K562 (cell line): ENCODE measurements at regions of chr5 and their contacts with region 1.

Region 1: DNA sequence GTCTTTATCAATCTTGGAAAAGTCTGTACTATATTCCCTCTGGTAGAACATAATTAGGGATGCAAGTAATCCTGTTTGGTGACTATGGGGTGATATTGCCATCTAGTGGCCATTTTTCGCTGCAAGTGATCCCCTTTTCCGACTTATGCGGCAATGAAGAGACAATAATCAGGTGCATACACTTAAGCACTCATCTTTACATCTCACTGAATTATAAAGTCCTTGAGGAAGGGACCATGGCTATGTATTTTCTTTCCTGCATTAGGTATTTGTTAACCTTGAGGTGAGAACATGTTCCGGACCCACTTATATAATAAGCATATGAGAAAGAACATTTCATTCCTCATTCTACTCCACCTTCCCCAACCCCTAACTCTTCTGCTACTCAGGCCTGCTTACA is 19.6 kb upstream of the LIX1 start:
- DNase-seq: peak; percentile 37 to 79 (median 44)
- ATAC-seq: peak; percentile 91
- H3K4me3 ChIP-seq: no peak overlapping the region
- H3K27ac ChIP-seq: no peak overlapping the region
- H3K4me1 ChIP-seq: no peaks in the 10 kb centered on the region
- H3K27me3 ChIP-seq: no peaks in the 10 kb centered on the region
- CTCF ChIP-seq: peak; percentile 75 to 87 (median 77)
- EP300 ChIP-seq: no peak
- POLR2A ChIP-seq: no peak
- RAD21 ChIP-seq: peak; percentile 85 to 91

Region 2: GRCh38 chr5:96344678-96345577 is 817.1 kb before region 1 on chr5:
- CTCF ChIA-PET with region 1: no interaction called
- POLR2A ChIA-PET with region 1: no interaction called
- in situ Hi-C with region 1: no loop called
- intact Hi-C with region 1: loop called (anchors 10 kb)
- DNase-seq: peak; percentile 17 to 45 (median 29)
- ATAC-seq: peak; percentile 85
- H3K4me3 ChIP-seq: no peak overlapping the region
- H3K27ac ChIP-seq: no peak overlapping the region
- H3K4me1 ChIP-seq: no peaks in the 10 kb centered on the region; a peak in 1 of 5 replicates
- H3K27me3 ChIP-seq: no peaks in the 10 kb centered on the region; a peak in 1 of 5 replicates
- CTCF ChIP-seq: peak; percentile 36 to 70 (median 50); a peak in 4 of 6 replicates
- EP300 ChIP-seq: no peak
- POLR2A ChIP-seq: no peak
- RAD21 ChIP-seq: peak; percentile 80 to 85

Region 3: GRCh38 chr5:96614110-96614691 is 547.8 kb before region 1 on chr5:
- CTCF ChIA-PET with region 1: interaction called, 4 read pairs
- POLR2A ChIA-PET with region 1: no interaction called
- in situ Hi-C with region 1: loop called (anchors 10 kb)
- intact Hi-C with region 1: loop called (anchors 2 kb)
- DNase-seq: peak; percentile 17 to 66 (median 36)
- ATAC-seq: peak; percentile 86
- H3K4me3 ChIP-seq: no peak overlapping the region
- H3K27ac ChIP-seq: no peak overlapping the region
- H3K4me1 ChIP-seq: no peaks in the 10 kb centered on the region
- H3K27me3 ChIP-seq: no peaks in the 10 kb centered on the region
- CTCF ChIP-seq: peak; percentile 41 to 70 (median 53); a peak in 5 of 6 replicates
- EP300 ChIP-seq: no peak
- POLR2A ChIP-seq: no peak
- RAD21 ChIP-seq: peak; percentile 90 to 92

Region 4: DNA sequence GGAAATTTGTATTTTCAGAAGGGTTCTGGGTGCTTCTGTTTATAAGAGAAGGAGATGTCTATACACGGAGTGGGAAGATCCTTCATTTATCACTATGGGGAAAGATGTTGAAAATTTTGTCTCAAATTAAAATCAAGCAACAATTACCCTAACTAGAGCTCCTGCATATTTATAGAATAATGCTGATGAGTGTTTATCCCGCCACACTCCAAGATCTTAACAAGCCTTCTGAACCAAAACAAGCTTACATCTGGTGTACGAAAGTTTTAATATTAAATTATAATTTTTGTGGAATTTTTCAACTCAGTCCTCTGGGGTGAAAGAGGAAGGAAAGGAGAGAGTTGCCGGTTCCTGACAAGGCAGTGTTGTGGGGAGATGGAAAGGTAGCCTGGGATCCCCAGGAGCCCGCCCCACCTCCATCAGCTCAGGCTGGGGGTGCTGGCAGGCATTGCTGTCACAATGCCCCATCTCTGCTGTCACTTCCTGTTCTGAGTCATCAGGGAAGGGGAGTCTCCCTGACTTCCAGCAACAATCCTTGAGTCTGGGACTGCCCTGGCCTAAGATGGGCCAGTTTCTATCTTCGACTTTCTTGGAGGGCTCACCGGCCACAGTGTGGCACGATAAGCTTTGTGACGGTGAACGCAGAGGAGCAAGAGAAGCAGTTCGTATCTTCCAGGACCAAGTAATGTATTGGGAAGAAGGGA is 418.8 kb before region 1 on chr5:
- CTCF ChIA-PET with region 1: no interaction called
- POLR2A ChIA-PET with region 1: no interaction called
- in situ Hi-C with region 1: loop called (anchors 5 kb)
- intact Hi-C with region 1: no loop called
- DNase-seq: peak; percentile 55 to 80 (median 60)
- ATAC-seq: peak; percentile 69
- H3K4me3 ChIP-seq: peak overlapping the region; percentile 28; the same call in 1 of the 2 replicates
- H3K27ac ChIP-seq: peak overlapping the region; percentile 85
- H3K4me1 ChIP-seq: peaks cover 10 to 44% of the 10 kb centered on the region in 2 experiments
- H3K27me3 ChIP-seq: no peaks in the 10 kb centered on the region
- CTCF ChIP-seq: no peak; a peak in 1 of 6 replicates
- EP300 ChIP-seq: no peak
- POLR2A ChIP-seq: no peak; the same call in 1 of the 2 replicates
- RAD21 ChIP-seq: no peak

Region 5: GRCh38 chr5:96868603-96869371 is 293.3 kb before region 1 on chr5:
- CTCF ChIA-PET with region 1: interaction called, 7 read pairs
- POLR2A ChIA-PET with region 1: no interaction called
- in situ Hi-C with region 1: no loop called
- intact Hi-C with region 1: loop called (anchors 1 kb)
- DNase-seq: peak; percentile 27 to 70 (median 42)
- ATAC-seq: peak; percentile 95
- H3K4me3 ChIP-seq: no peak overlapping the region
- H3K27ac ChIP-seq: no peak overlapping the region
- H3K4me1 ChIP-seq: peaks cover 0 to 5% of the 10 kb centered on the region in 2 experiments; a peak in 2 of 5 replicates
- H3K27me3 ChIP-seq: no peaks in the 10 kb centered on the region
- CTCF ChIP-seq: peak; percentile 82 to 94 (median 88)
- EP300 ChIP-seq: no peak
- POLR2A ChIP-seq: no peak
- RAD21 ChIP-seq: peak; percentile 97 to 99

Region 6: DNA sequence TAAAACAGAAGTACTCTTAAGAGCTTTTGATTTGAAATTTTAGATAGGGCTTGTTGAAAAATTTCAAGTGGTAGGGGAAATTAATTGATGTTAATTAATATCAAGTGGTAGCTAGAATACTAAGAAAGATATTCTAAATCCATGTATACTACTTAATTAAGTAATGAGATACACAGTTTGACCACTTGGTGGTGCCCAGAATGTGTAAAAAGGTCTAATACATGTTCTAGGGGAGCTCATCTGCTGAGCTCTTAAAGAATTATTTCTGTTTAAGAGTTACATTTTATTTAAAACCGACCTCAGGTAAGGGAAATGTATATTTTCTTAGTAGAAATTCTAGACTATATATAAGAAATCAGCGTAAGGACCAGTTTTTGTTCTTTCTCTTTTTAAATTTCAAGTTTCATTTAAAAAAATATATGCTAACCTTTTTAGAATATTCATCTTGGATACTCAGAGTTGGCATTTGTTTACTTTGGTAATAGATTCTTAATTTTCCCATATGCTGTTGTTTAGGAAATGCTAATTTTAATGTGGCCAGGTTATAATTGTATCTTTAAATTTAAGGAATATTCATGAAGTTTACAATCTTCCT is 164.7 kb before region 1 on chr5:
- CTCF ChIA-PET with region 1: interaction called, 16 read pairs
- POLR2A ChIA-PET with region 1: no interaction called
- in situ Hi-C with region 1: no loop called
- intact Hi-C with region 1: loop called (anchors 5 kb)
- DNase-seq: peak; percentile 13 to 56 (median 22)
- ATAC-seq: peak; percentile 82
- H3K4me3 ChIP-seq: no peak overlapping the region
- H3K27ac ChIP-seq: no peak overlapping the region
- H3K4me1 ChIP-seq: no peaks in the 10 kb centered on the region
- H3K27me3 ChIP-seq: no peaks in the 10 kb centered on the region
- CTCF ChIP-seq: peak in 2 of 3 experiments; percentile 31 to 60; a peak in 3 of 6 replicates
- EP300 ChIP-seq: no peak
- POLR2A ChIP-seq: no peak
- RAD21 ChIP-seq: peak; percentile 57 to 73

Region 7: DNA sequence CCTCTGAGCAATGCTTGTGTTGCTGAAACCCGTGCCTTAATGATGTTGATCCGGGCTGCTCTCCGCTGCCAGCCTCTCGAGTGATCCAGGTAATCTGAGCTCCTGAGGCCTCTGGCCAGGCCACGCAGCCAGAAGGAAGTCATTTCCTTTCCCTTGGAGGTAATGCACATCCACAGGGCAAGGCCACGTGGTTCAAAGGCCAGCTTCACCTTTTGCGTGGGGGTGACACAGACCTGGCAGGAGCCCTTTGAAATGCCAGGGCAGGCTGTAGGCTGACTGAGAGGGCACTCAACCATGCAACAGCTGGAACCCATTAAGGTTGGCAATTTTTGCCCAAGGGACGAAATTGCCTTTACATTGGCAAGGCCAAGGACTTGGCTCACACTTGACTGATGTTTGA is 100.0 kb before region 1 on chr5:
- CTCF ChIA-PET with region 1: no interaction called
- POLR2A ChIA-PET with region 1: no interaction called
- in situ Hi-C with region 1: no loop called
- intact Hi-C with region 1: loop called (anchors 5 kb)
- DNase-seq: no peak
- ATAC-seq: no peak
- H3K4me3 ChIP-seq: no peak overlapping the region
- H3K27ac ChIP-seq: no peak overlapping the region
- H3K4me1 ChIP-seq: no peaks in the 10 kb centered on the region
- H3K27me3 ChIP-seq: no peaks in the 10 kb centered on the region; a peak in 1 of 5 replicates
- CTCF ChIP-seq: no peak
- EP300 ChIP-seq: no peak
- POLR2A ChIP-seq: no peak
- RAD21 ChIP-seq: no peak